Naive thymus-derived CD4-positive, alpha-beta T cell (primary cell): ENCODE measurements at regions of chr19 and their contacts with region 1.

Region 1: GRCh38 chr19:10106100-10106936 is at the start of gene PPAN:
- DNase-seq: peak; percentile 88 to 98 (median 97)
- ATAC-seq: peak; percentile 86
- H3K4me3 ChIP-seq: peak within 1 kb of the TSS; percentile 60
- H3K4me3 Mint-ChIP-seq: peak within 1 kb of the TSS; percentile 75 to 91 (median 88)
- H3K27ac ChIP-seq: peak within 1 kb of the TSS; percentile 86
- H3K27ac Mint-ChIP-seq: peak within 1 kb of the TSS; percentile 92 to 98 (median 97)
- H3K4me1 ChIP-seq: peaks cover 53 to 65% of the 10 kb centered on the region in 2 donors
- H3K4me1 Mint-ChIP-seq: peaks cover 32 to 61% (median 56%) of the 10 kb centered on the region in 7 donors
- H3K27me3 ChIP-seq: no peaks in the 10 kb centered on the region
- H3K27me3 Mint-ChIP-seq: no peaks in the 10 kb centered on the region
- total RNA-seq, gene PPAN: 87.6 to 122 (median 109) TPM

Region 2: GRCh38 chr19:10085641-10086590 is 20.4 kb before region 1 on chr19 and contains the start of gene SHFL:
- CTCF ChIA-PET with region 1: no interaction called
- POLR2A ChIA-PET with region 1: interaction called, 5 read pairs
- intact Hi-C with region 1: loop called (anchors 1 kb)
- DNase-seq: peak; percentile 71 to 90 (median 83)
- ATAC-seq: peak; percentile 98
- H3K4me3 ChIP-seq: peak within 1 kb of the TSS; percentile 94
- H3K4me3 Mint-ChIP-seq: peak within 1 kb of the TSS; percentile 75 to 92 (median 90)
- H3K27ac ChIP-seq: peak within 1 kb of the TSS; percentile 90
- H3K27ac Mint-ChIP-seq: peak within 1 kb of the TSS; percentile 81 to 92 (median 88)
- H3K4me1 ChIP-seq: peaks cover 4 to 9% of the 10 kb centered on the region in 2 donors
- H3K4me1 Mint-ChIP-seq: peaks cover 8 to 21% (median 8%) of the 10 kb centered on the region in 7 donors
- H3K27me3 ChIP-seq: no peaks in the 10 kb centered on the region
- H3K27me3 Mint-ChIP-seq: no peaks in the 10 kb centered on the region
- total RNA-seq, gene SHFL: 67.8 to 112 (median 102) TPM

Region 3: GRCh38 chr19:10095948-10096621 is 10.2 kb before region 1 on chr19:
- CTCF ChIA-PET with region 1: interaction called, 3 read pairs
- POLR2A ChIA-PET with region 1: interaction called, 60 read pairs
- intact Hi-C with region 1: loop called (anchors 1 kb)
- DNase-seq: peak; percentile 86 to 98 (median 92)
- ATAC-seq: peak; percentile 95
- H3K4me3 ChIP-seq: peak overlapping the region; percentile 48
- H3K4me3 Mint-ChIP-seq: peak overlapping the region; percentile 27 to 73 (median 60)
- H3K27ac ChIP-seq: peak overlapping the region; percentile 77
- H3K27ac Mint-ChIP-seq: peak overlapping the region in 8 of 9 donors; percentile 41 to 92 (median 74)
- H3K4me1 ChIP-seq: peaks cover 21 to 22% of the 10 kb centered on the region in 2 donors
- H3K4me1 Mint-ChIP-seq: peaks cover 0 to 35% (median 25%) of the 10 kb centered on the region in 7 donors
- H3K27me3 ChIP-seq: no peaks in the 10 kb centered on the region
- H3K27me3 Mint-ChIP-seq: no peaks in the 10 kb centered on the region

Region 4: GRCh38 chr19:10120538-10121189 is 14.3 kb after region 1 on chr19:
- CTCF ChIA-PET with region 1: interaction called, 6 read pairs
- POLR2A ChIA-PET with region 1: interaction called, 85 read pairs
- intact Hi-C with region 1: loop called (anchors 1 kb)
- DNase-seq: no peak
- ATAC-seq: no peak
- H3K4me3 ChIP-seq: no peak overlapping the region
- H3K4me3 Mint-ChIP-seq: peak overlapping the region in 4 of 10 donors; percentile 15 to 42 (median 34)
- H3K27ac ChIP-seq: no peak overlapping the region
- H3K27ac Mint-ChIP-seq: no peak overlapping the region
- H3K4me1 ChIP-seq: peaks cover 10 to 25% of the 10 kb centered on the region in 2 donors
- H3K4me1 Mint-ChIP-seq: peaks cover 5 to 30% (median 15%) of the 10 kb centered on the region in 7 donors
- H3K27me3 ChIP-seq: no peaks in the 10 kb centered on the region
- H3K27me3 Mint-ChIP-seq: no peaks in the 10 kb centered on the region

Region 5: GRCh38 chr19:10194500-10195289 is 88.4 kb after region 1 on chr19 and contains the start of gene DNMT1:
- CTCF ChIA-PET with region 1: no interaction called
- POLR2A ChIA-PET with region 1: interaction called, 6 read pairs
- intact Hi-C with region 1: loop called in 1 of 2 experiments (anchors 5 kb)
- DNase-seq: peak; percentile 87 to 98 (median 93)
- ATAC-seq: peak; percentile 99
- H3K4me3 ChIP-seq: peak within 1 kb of the TSS; percentile 88
- H3K4me3 Mint-ChIP-seq: peak within 1 kb of the TSS; percentile 87 to 98 (median 95)
- H3K27ac ChIP-seq: peak within 1 kb of the TSS; percentile 81
- H3K27ac Mint-ChIP-seq: peak within 1 kb of the TSS; percentile 82 to 96 (median 92)
- H3K4me1 ChIP-seq: peaks cover 7 to 20% of the 10 kb centered on the region in 2 donors
- H3K4me1 Mint-ChIP-seq: peaks cover 14 to 48% (median 40%) of the 10 kb centered on the region in 7 donors
- H3K27me3 ChIP-seq: no peaks in the 10 kb centered on the region
- H3K27me3 Mint-ChIP-seq: no peaks in the 10 kb centered on the region
- total RNA-seq, gene DNMT1: 175 to 334 (median 194) TPM

Region 6: GRCh38 chr19:10424011-10424637 is 317.8 kb after region 1 on chr19:
- CTCF ChIA-PET with region 1: no interaction called
- POLR2A ChIA-PET with region 1: no interaction called
- intact Hi-C with region 1: loop called in 1 of 2 experiments (anchors 10 kb)
- DNase-seq: peak in 8 of 9 donors; percentile 44 to 81 (median 64)
- ATAC-seq: peak; percentile 33
- H3K4me3 ChIP-seq: peak overlapping the region; percentile 40
- H3K4me3 Mint-ChIP-seq: peak overlapping the region in 7 of 10 donors; percentile 17 to 86 (median 61)
- H3K27ac ChIP-seq: no peak overlapping the region
- H3K27ac Mint-ChIP-seq: peak overlapping the region in 2 of 9 donors; percentile 36 to 81
- H3K4me1 ChIP-seq: peaks cover 37 to 61% of the 10 kb centered on the region in 2 donors
- H3K4me1 Mint-ChIP-seq: peaks cover 40 to 77% (median 51%) of the 10 kb centered on the region in 7 donors
- H3K27me3 ChIP-seq: peaks cover 9 to 32% of the 10 kb centered on the region in 2 donors
- H3K27me3 Mint-ChIP-seq: peaks cover 18 to 52% (median 43%) of the 10 kb centered on the region in 5 donors